Activated CD8-positive, alpha-beta T cell treated with anti-CD3 and anti-CD28 coated beads, Interleukin-2, amount 10 ng/mL, durations not matched to agents 7 days and 5 days (primary cell): ENCODE measurements at regions of chr1 and their contacts with region 1.

Region 1: GRCh38 chr1:150995896-150996295 is 10.8 kb downstream of the MINDY1 start:
- DNase-seq: peak; percentile 51
- ATAC-seq: peak; percentile 38
- H3K4me3 Mint-ChIP-seq: no peak overlapping the region
- H3K27ac Mint-ChIP-seq: no peak overlapping the region
- H3K4me1 Mint-ChIP-seq: peaks cover 20% of the 10 kb centered on the region
- H3K27me3 Mint-ChIP-seq: no peaks in the 10 kb centered on the region

Region 2: GRCh38 chr1:150765296-150765976 is 230.5 kb before region 1 on chr1 and contains the start of gene CTSS:
- CTCF ChIA-PET with region 1: interaction called, 10 read pairs
- POLR2A ChIA-PET with region 1: no interaction called
- DNase-seq: peak; percentile 25
- ATAC-seq: peak; percentile 80
- H3K4me3 Mint-ChIP-seq: peak within 1 kb of the TSS; percentile 96
- H3K27ac Mint-ChIP-seq: peak within 1 kb of the TSS; percentile 96
- H3K4me1 Mint-ChIP-seq: peaks cover 36% of the 10 kb centered on the region
- H3K27me3 Mint-ChIP-seq: peaks cover under 1% of the 10 kb centered on the region
- total RNA-seq, gene CTSS: 65.8 to 73.2 TPM

Region 3: GRCh38 chr1:150979092-150980056 is 16.5 kb before region 1 on chr1:
- CTCF ChIA-PET with region 1: interaction called, 164 read pairs
- POLR2A ChIA-PET with region 1: no interaction called
- DNase-seq: peak; percentile 93
- ATAC-seq: peak; percentile 66
- H3K4me3 Mint-ChIP-seq: peak overlapping the region; percentile 43
- H3K27ac Mint-ChIP-seq: peak overlapping the region; percentile 27
- H3K4me1 Mint-ChIP-seq: peaks cover 46% of the 10 kb centered on the region
- H3K27me3 Mint-ChIP-seq: no peaks in the 10 kb centered on the region